WTC11 (cell line): ENCODE measurements at regions of chr7 and their contacts with region 1.

Region 1: DNA sequence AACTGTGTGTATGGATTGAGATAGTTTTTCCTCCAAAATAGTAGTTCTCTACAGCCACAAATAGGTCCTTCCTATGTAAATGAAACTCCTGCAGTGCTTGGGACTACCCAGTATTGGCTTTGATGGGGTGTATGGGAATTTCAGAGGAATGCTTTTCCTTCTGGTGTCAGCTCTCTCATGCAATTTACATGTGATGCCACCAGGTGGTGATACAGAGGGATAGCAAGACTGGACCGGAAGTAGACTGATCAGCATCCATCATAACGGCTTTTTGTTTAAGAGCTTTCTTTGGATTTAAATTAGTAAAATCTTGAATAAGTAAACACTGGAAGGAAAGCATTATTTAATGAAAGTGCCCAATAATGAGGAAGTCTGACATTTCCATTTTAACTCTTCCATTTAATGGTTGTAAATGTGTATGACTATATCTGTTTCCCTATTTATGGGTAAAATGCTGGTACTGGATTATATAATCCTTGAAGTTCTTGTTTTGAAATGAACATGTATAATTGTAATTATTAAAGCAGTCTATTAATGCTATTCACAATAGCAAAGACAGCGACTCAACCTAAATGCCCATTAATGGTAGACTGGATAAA is 22.7 kb downstream of the DYNC1I1 start:
- DNase-seq: no peak
- ATAC-seq: peak; percentile 89
- H3K4me3 Mint-ChIP-seq: no peak overlapping the region
- H3K27ac Mint-ChIP-seq: no peak overlapping the region
- H3K4me1 Mint-ChIP-seq: peaks cover 11% of the 10 kb centered on the region
- H3K27me3 Mint-ChIP-seq: peaks cover 61% of the 10 kb centered on the region
- CTCF ChIP-seq: peak; percentile 66

Region 2: GRCh38 chr7:95660023-95660434 is 135.0 kb before region 1 on chr7:
- CTCF ChIA-PET with region 1: no interaction called
- POLR2A ChIA-PET with region 1: no interaction called
- DNase-seq: no peak
- ATAC-seq: no peak
- H3K4me3 Mint-ChIP-seq: no peak overlapping the region
- H3K27ac Mint-ChIP-seq: no peak overlapping the region
- H3K4me1 Mint-ChIP-seq: no peaks in the 10 kb centered on the region
- H3K27me3 Mint-ChIP-seq: no peaks in the 10 kb centered on the region
- CTCF ChIP-seq: no peak

Region 3: DNA sequence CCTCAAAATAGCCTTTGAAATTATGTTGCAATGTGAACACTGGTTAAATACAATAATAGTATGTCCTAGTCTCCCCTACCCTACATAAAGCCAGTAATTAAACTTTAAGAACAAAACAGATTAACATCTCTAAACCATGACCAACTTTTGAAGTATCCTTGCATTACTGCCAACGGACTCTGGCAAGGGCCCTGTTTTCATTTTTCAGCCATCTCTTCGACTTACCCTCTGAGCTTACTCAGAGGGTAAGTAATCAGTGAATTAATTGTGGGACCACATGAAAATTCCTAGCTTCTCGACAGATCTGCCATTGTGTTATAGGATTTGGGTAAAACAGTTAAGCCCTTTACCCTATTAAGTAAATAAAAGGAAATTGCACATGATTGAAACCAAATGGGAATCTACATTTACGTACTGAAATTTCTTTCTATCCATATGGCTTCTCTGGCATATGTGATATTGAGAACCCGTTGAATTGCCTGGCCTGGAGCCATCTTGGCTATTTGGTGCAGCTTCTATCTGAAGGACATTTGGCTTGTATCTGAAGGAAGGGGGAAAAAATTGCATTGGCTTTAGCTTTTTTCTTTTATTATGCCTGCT is 16.9 kb after region 1 on chr7:
- CTCF ChIA-PET with region 1: interaction called, 11 read pairs
- POLR2A ChIA-PET with region 1: no interaction called
- DNase-seq: no peak
- ATAC-seq: no peak
- H3K4me3 Mint-ChIP-seq: no peak overlapping the region
- H3K27ac Mint-ChIP-seq: no peak overlapping the region
- H3K4me1 Mint-ChIP-seq: peaks cover 16% of the 10 kb centered on the region
- H3K27me3 Mint-ChIP-seq: no peaks in the 10 kb centered on the region
- CTCF ChIP-seq: no peak